GM12878 (cell line): ENCODE measurements at regions of chr13 and their contacts with region 1.

Region 1: GRCh38 chr13:32175307-32175706 is 139.9 kb downstream of the ZAR1L start:
- DNase-seq: no peak
- ATAC-seq: no peak
- H3K4me3 ChIP-seq: no peak overlapping the region
- H3K27ac ChIP-seq: no peak overlapping the region
- H3K4me1 ChIP-seq: no peaks in the 10 kb centered on the region
- H3K27me3 ChIP-seq: no peaks in the 10 kb centered on the region
- CTCF ChIP-seq: no peak
- EP300 ChIP-seq: no peak
- POLR2A ChIP-seq: no peak
- RAD21 ChIP-seq: no peak

Region 2: DNA sequence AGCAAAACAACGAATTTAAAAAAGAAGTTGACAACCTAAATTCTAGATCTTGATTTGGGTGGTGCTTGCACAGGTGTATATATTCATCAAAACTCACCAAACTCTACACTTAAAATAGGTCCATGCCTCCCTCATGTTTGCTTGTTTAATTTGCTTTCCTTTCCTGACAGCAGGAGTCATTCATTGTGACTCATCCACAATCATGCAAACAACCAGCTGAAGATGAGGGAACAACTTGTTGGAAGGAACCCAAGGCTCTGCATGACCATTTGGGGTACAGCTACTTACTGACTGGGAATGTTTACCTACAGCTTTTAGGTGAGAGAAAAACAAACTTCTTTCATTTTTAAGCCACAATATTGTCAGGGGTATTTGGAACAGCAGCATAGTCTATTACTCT is 339.4 kb before region 1 on chr13:
- CTCF ChIA-PET with region 1: no interaction called
- POLR2A ChIA-PET with region 1: no interaction called
- RAD21 ChIA-PET with region 1: no interaction called
- SMC1A ChIA-PET with region 1: no interaction called
- in situ Hi-C with region 1: no loop called
- intact Hi-C with region 1: no loop called
- DNase-seq: no peak
- ATAC-seq: no peak
- H3K4me3 ChIP-seq: no peak overlapping the region
- H3K27ac ChIP-seq: no peak overlapping the region
- H3K4me1 ChIP-seq: no peaks in the 10 kb centered on the region
- H3K27me3 ChIP-seq: 0 out of 4 replicates have a peak, but pooled peaks cover 0 to 4% of the 10 kb centered on the region in 2 experiments
- CTCF ChIP-seq: no peak
- EP300 ChIP-seq: no peak
- POLR2A ChIP-seq: no peak
- RAD21 ChIP-seq: no peak

Region 3: GRCh38 chr13:32164622-32165268 is 10.6 kb before region 1 on chr13:
- CTCF ChIA-PET with region 1: interaction called, 12 read pairs
- POLR2A ChIA-PET with region 1: no interaction called
- RAD21 ChIA-PET with region 1: no interaction called
- SMC1A ChIA-PET with region 1: interaction called, 4 read pairs
- in situ Hi-C with region 1: no loop called
- intact Hi-C with region 1: no loop called
- DNase-seq: peak; percentile 11
- ATAC-seq: peak; percentile 82
- H3K4me3 ChIP-seq: no peak overlapping the region
- H3K27ac ChIP-seq: no peak overlapping the region
- H3K4me1 ChIP-seq: peaks cover 3% of the 10 kb centered on the region; the same call in 1 of the 2 replicates
- H3K27me3 ChIP-seq: no peaks in the 10 kb centered on the region
- CTCF ChIP-seq: peak; percentile 19 to 56 (median 41); a peak in 4 of 6 replicates
- EP300 ChIP-seq: no peak
- POLR2A ChIP-seq: no peak
- RAD21 ChIP-seq: peak; percentile 41; the same call in 1 of the 2 replicates